ENCODE measurements at regions of chr7 and their contacts with region 1.

Region 1: DNA sequence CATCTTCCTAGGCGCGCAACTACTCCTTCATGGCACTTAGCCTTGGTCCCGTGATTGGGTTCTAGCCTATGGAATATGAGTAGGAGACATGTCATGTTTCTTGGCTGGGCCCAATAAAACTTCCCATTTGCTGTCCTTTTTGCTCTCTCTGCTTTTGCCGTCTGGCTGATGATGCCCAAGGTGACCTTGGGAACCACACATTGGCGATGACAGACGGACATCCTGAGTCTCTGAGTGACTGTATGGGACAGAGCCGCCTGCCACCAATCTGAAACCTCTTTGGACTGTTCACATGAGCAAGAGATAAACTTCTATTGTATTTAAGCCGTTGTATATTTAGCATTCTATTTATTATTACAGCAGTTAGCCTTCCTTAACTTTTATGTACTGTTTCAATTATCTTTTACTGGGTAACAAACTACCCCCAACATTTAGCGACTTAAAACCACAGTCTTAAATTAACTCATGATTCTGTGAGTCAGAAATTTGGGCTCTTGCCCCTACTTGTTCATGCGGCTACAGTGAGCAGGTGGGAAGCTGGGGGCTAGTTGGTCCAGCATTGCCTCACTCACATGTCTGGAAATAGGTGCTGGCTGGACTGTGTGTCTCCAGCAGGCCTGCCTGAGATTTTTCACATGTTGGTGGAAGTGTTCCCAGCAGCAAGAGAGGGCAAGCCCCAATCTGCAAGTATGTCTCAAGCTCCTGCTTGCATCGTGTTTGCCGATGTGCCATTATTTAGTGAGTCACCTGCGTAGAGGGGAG is 71.7 kb downstream of the NOD1 start:
- DNase-seq: no peak
- ATAC-seq: no peak
- H3K4me3 ChIP-seq: no peak overlapping the region
- H3K27ac ChIP-seq: no peak overlapping the region
- H3K4me1 ChIP-seq: peaks cover 3% of the 10 kb centered on the region
- H3K27me3 ChIP-seq: no peaks in the 10 kb centered on the region
- CTCF ChIP-seq: no peak
- POLR2A ChIP-seq: no peak

Region 2: DNA sequence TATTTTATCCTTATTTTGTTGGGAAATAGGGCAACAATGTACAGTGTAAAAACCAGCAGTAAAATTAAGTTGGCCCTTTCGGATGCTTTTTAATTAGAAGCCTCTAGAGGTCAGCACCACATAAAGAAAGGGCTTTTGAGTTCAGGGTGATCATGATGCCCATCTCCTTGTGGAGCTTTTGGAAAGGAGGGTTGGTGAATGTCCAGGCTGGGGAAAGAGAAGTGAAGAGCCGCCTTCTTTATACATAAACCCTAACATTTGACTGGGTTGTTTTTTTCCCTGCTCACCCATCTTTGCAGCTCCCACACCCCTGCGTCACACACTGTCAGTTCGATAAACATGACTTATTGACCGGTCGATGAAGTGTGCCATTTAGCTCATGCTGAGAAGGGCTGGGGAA is 242.3 kb before region 1 on chr7:
- intact Hi-C with region 1: loop called (anchors 10 kb)
- DNase-seq: peak in 1 of 4 donors; percentile 46
- ATAC-seq: peak; percentile 67
- H3K4me3 ChIP-seq: no peak overlapping the region
- H3K27ac ChIP-seq: no peak overlapping the region
- H3K4me1 ChIP-seq: peaks cover 25% of the 10 kb centered on the region
- H3K27me3 ChIP-seq: no peaks in the 10 kb centered on the region
- CTCF ChIP-seq: peak; percentile 15 to 79 (median 74)
- POLR2A ChIP-seq: no peak

Region 3: GRCh38 chr7:30353932-30354607 is 52.8 kb before region 1 on chr7:
- intact Hi-C with region 1: no loop called
- DNase-seq: no peak
- ATAC-seq: no peak
- H3K4me3 ChIP-seq: no peak overlapping the region
- H3K27ac ChIP-seq: no peak overlapping the region
- H3K4me1 ChIP-seq: peaks cover 13% of the 10 kb centered on the region
- H3K27me3 ChIP-seq: no peaks in the 10 kb centered on the region
- CTCF ChIP-seq: no peak
- POLR2A ChIP-seq: no peak

Region 4: GRCh38 chr7:30459591-30460257 is 52.9 kb after region 1 on chr7:
- intact Hi-C with region 1: no loop called
- DNase-seq: peak in 3 of 4 donors; percentile 32 to 45 (median 45)
- ATAC-seq: peak; percentile 59
- H3K4me3 ChIP-seq: no peak overlapping the region
- H3K27ac ChIP-seq: no peak overlapping the region
- H3K4me1 ChIP-seq: no peaks in the 10 kb centered on the region
- H3K27me3 ChIP-seq: no peaks in the 10 kb centered on the region
- CTCF ChIP-seq: no peak
- POLR2A ChIP-seq: no peak